HEK293 (cell line): ENCODE measurements at regions of chr16 and their contacts with region 1.

Region 1: DNA sequence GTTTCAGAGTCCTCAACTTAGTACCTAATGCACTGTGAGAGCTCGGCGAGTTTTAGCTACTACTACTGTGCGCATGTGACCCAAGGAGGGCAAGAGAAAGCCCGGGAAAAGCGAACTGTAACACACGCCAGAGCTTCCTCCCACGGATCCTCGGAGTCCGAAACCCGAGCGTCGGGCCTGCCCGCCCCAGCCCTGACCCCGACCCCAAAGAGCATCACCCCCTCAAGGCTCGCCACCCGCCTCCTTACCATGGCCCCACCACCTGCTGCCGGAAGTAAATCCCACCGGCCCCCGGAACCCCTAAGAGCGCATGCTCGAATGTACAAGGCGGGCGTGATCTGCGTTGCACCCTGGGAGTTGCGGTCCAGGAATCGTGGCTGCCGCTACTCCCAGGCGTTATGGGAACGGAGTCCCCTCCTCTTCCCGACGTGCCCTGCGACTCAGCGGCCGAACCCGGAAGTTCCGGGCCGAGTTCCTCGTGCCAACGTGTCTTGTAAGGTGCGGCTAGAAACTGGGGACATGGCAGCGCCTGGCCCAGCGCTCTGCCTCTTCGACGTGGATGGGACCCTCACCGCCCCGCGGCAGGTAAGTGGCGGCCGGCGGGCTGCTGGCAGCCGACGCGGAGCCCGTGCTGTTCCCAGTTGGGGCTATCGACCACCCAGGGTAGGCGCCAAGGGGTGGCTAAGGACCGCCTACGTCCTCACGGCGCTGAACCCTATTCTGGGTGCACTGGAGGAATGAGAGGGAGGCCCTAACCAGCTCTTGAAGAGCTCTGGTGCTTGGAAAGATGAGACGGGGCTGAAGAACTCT is at the starts of genes PMM2 and TMEM186:
- H3K4me3 ChIP-seq: peak within 1 kb of the TSS; percentile 87
- H3K27ac ChIP-seq: peak within 1 kb of the TSS; percentile 40; the same call in 1 of the 2 replicates
- H3K4me1 ChIP-seq: no peaks in the 10 kb centered on the region
- CTCF ChIP-seq: no peak

Region 2: GRCh38 chr16:8673611-8674412 is 123.8 kb before region 1 on chr16:
- CTCF ChIA-PET with region 1: interaction called, 16 read pairs
- POLR2A ChIA-PET with region 1: no interaction called
- H3K4me3 ChIP-seq: peak overlapping the region; percentile 44
- H3K27ac ChIP-seq: no peak overlapping the region
- H3K4me1 ChIP-seq: peaks cover 15% of the 10 kb centered on the region
- CTCF ChIP-seq: no peak

Region 3: DNA sequence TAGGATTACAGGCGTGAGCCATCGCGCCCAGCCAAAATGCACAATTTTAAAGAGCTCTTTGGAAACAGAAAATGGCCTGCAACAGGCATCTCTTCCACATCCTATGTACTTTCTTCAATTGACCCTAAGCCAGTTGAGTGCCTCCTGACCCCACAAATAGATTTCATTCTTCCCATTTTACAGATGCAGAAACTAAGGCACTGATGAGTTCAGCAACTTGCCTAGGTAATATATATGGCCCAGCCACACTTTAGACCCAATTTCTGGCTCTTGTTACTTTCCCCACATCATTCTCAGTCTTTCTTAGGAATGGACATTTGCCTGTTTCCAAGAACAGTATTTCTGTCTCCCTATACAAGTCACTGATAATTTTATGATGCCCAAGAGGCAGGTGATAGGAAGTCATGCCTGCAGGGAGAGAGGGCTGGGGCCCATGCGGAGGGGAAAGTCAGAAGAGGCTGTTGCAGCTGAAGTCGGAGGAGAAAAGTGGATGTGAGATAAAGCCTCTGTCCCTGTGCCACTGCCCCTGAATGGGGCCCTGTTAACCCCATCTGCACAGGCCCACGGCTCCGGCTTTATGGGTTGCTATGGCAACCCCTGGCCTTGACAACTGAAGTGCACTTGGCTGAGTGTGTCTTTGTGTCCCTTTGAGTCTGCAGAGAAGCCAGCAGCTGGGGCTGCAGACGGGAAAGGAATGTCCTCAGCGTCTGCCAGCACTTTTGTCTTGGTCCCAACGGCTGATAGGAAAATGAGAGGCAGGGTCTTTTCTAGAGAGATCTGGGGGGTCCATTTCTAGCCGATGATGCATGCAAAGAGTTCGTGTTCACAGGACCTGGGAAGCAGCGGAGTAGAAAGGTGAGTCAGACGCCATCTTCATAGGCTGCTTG is 77.2 kb before region 1 on chr16:
- CTCF ChIA-PET with region 1: no interaction called
- POLR2A ChIA-PET with region 1: no interaction called
- H3K4me3 ChIP-seq: no peak overlapping the region
- H3K27ac ChIP-seq: no peak overlapping the region
- H3K4me1 ChIP-seq: no peaks in the 10 kb centered on the region
- CTCF ChIP-seq: no peak

Region 4: DNA sequence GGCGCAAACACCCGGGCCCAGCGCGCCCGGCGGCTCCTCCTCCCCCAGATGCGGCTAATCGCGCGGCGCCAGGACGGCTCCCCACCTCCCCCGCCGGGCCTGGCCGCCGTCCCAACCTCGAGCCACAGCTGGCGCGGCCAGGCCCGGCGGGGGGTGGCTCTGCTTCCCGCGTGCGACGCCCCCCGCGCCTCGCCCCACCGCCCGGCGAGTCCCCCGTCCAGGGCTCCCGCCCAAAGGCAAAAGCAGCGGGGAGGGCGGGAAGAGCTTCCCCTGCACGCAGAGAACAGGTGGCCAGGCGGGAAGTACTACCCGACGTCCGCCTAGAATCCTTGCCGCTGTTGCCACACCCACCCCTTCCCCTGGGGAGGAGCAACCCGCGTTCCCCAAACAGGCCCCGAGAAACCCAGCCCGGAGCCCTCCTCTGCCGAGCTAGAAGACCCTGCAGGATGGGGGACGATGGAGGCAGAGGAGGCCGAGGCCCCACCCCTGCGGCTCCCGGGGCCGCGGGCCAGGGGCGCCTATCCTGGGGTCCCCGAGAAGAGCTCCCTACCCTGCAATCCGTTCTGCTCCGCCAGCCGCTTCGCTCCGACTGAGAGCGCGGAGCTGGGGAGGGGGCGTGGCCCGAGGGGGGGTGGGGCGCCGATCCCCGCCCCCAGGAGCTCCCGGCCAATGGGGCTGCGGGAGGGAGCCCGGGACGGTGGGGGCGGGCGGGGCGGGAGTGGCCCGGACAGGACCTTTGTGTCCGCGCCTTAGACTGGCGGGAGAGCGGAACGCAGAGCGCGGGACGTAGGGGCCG is 71.0 kb after region 1 on chr16 and contains the start of gene CARHSP1:
- CTCF ChIA-PET with region 1: interaction called, 3 read pairs
- POLR2A ChIA-PET with region 1: interaction called, 14 read pairs
- H3K4me3 ChIP-seq: peak within 1 kb of the TSS; percentile 75
- H3K27ac ChIP-seq: peak within 1 kb of the TSS; percentile 90
- H3K4me1 ChIP-seq: peaks cover 11% of the 10 kb centered on the region
- CTCF ChIP-seq: no peak